Esophagus muscularis mucosa (tissue), 4 donors: ENCODE measurements at regions of chr12 and their contacts with region 1.

Region 1: DNA sequence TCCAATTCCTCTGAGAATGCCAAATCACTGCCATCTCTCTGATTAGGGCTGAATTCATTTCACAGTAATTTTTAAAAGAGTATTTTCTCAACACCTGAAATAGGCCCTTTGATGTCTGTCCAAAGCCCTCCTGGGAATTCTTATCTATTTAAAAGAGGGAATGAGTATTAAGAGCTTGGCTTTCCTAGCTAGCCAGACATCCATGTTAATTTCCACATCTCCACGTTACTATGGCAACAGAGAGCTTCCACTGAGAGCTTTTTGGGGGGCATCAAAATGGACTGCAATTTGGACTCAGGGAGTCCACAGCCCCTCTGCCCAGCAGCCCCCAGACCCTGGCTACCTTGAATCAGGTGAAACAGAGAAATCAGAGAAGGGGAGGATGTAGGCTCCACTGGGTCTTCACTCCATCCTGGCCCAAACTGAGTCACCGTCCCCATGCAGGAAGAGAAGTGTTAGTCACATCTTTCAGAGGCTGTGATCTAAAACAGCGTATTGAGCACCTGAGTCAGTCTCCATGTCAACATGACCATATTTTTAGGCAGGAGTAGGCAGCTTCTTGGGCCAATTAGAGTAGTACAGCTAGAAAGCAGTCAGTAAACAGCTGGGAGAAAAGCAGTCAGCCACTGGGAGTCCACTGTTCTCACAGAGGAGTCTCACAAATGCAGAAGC is 7.0 kb upstream of the FICD start:
- DNase-seq: no peak
- H3K4me3 ChIP-seq: no peak overlapping the region
- H3K27ac ChIP-seq: no peak overlapping the region
- H3K4me1 ChIP-seq: peaks cover 0 to 9% (median 8%) of the 10 kb centered on the region in 4 donors
- H3K27me3 ChIP-seq: peaks cover 0 to 7% (median 0%) of the 10 kb centered on the region in 4 donors
- CTCF ChIP-seq: no peak
- EP300 ChIP-seq: no peak
- POLR2A ChIP-seq: no peak

Region 2: GRCh38 chr12:107917912-107918800 is 590.0 kb before region 1 on chr12:
- intact Hi-C with region 1: loop called (anchors 5 kb)
- DNase-seq: peak; percentile 72
- H3K4me3 ChIP-seq: no peak overlapping the region
- H3K27ac ChIP-seq: no peak overlapping the region
- H3K4me1 ChIP-seq: no peaks in the 10 kb centered on the region
- H3K27me3 ChIP-seq: peaks cover 0 to 33% (median 0%) of the 10 kb centered on the region in 4 donors
- CTCF ChIP-seq: peak; percentile 33 to 51 (median 43)
- EP300 ChIP-seq: no peak
- POLR2A ChIP-seq: no peak

Region 3: DNA sequence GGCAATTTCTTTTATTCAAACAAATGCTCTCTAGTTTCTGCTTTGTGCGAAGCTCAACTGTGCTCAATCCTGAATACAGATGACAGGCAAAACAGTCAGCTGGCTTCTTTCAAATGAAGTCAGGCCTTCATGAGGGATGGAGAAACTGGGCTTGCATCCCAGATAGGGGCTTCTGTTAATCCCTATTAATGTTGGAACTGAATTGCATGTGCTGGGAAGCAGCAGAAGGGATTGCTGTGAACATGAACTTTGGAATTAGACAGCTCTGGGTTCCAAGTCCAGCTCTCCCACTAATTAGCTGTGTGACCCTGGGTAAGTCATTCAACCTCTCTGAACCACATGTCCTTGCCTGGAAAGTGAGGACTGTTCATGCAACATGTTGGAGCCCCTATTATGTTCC is 244.3 kb after region 1 on chr12:
- intact Hi-C with region 1: no loop called
- DNase-seq: no peak
- H3K4me3 ChIP-seq: no peak overlapping the region
- H3K27ac ChIP-seq: peak overlapping the region; percentile 33 to 65 (median 58)
- H3K4me1 ChIP-seq: peaks cover 3 to 30% (median 27%) of the 10 kb centered on the region in 4 donors
- H3K27me3 ChIP-seq: no peaks in the 10 kb centered on the region
- CTCF ChIP-seq: no peak
- EP300 ChIP-seq: no peak
- POLR2A ChIP-seq: no peak